ENCODE measurements at regions of chr5 and their contacts with region 1.

Region 1: GRCh38 chr5:146466521-146467349 is 19.6 kb downstream of the TCERG1 start:
- DNase-seq: no peak
- H3K4me3 Mint-ChIP-seq: no peak overlapping the region
- H3K27ac Mint-ChIP-seq: no peak overlapping the region
- H3K4me1 Mint-ChIP-seq: peaks cover 15% of the 10 kb centered on the region
- H3K27me3 Mint-ChIP-seq: no peaks in the 10 kb centered on the region

Region 2: GRCh38 chr5:146218168-146218567 is 248.6 kb before region 1 on chr5:
- intact Hi-C with region 1: no loop called
- DNase-seq: no peak
- H3K4me3 Mint-ChIP-seq: no peak overlapping the region
- H3K27ac Mint-ChIP-seq: no peak overlapping the region
- H3K4me1 Mint-ChIP-seq: peaks cover 23% of the 10 kb centered on the region
- H3K27me3 Mint-ChIP-seq: no peaks in the 10 kb centered on the region

Region 3: DNA sequence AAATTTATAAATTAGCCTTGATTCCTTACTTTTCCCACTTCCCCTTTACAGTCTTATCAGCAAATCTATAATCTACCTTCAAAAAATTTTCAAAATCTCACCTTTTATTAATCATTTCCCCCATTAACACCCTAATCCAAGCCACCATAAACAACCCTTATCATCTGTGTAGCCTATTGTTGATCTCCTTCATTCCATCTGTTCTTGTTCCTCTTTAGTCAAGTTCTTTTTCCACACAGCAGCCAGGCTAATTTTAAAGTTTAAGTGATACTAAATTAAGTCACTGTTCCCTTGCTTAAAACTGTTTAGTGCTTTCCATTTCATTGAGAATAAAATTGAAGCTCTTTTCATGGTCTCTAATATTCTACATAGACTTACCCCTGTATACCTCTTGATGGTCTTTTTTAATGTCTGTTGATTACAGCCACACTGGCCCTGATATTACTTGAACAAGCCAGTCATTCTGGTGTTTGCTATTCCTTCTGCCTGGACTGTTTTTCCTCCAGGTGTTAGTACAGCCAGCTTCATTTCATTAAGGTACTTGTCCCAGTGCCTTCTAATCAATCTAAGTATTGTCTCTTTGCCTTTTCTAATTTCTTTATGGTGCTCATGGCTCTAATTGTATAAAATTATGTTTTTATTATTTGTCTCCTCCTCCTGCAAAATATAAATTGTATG is 18.1 kb after region 1 on chr5:
- intact Hi-C with region 1: loop called (anchors 2 kb)
- DNase-seq: no peak
- H3K4me3 Mint-ChIP-seq: no peak overlapping the region
- H3K27ac Mint-ChIP-seq: no peak overlapping the region
- H3K4me1 Mint-ChIP-seq: no peaks in the 10 kb centered on the region
- H3K27me3 Mint-ChIP-seq: no peaks in the 10 kb centered on the region

Measured in activated T-helper 2 cell treated with anti-CD3 and anti-CD28 coated beads, Interferon-gamma antibody, Interleukin-2, Interleukin-4, amounts not matched to agents 10 μg/mL and 5 μg/mL and 100 μg/mL, durations not matched to agents 14 hours and 24 hours and 36 hours (primary cell).